CD14-positive monocyte (primary cell): ENCODE measurements at regions of chr9 and their contacts with region 1.

Region 1: DNA sequence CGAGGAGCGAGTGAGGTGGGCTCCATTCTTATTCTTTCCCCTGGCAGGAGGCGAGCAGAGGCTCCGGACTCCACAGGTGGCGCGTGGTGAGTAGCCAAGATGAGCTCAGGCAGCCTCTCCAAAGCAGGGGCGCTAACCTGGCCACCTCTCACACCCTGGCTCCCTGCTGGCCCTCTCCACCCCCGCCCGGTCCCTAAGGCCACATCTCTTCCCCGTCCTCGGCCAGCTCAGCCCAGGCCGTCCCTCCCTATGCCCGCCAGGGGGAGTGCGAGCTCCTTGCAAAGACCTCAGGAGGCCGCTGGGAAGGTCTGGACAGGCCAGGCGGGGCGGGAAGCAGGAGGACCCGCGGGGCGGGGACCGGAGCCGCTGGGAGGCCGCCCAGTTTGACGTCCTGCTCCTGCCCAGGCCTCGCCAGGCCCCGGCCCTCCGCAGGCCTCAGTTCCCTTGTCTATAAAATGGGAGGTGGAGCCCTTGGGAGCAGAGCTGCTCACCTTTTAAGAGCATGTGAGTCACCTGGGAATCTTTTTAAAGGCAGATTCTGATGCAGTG is 46.3 kb upstream of the GGTA1 start:
- DNase-seq: peak; percentile 81 to 89 (median 84)
- H3K4me3 ChIP-seq: no peak overlapping the region
- H3K4me3 Mint-ChIP-seq: no peak overlapping the region
- H3K27ac ChIP-seq: no peak overlapping the region
- H3K27ac Mint-ChIP-seq: no peak overlapping the region
- H3K4me1 ChIP-seq: peaks cover 14 to 15% of the 10 kb centered on the region in 2 donors
- H3K4me1 Mint-ChIP-seq: peaks cover 12% of the 10 kb centered on the region
- H3K27me3 ChIP-seq: peaks cover 0 to 9% of the 10 kb centered on the region in 2 donors
- H3K27me3 Mint-ChIP-seq: peaks cover 6 to 41% (median 31%) of the 10 kb centered on the region in 3 donors
- CTCF ChIP-seq: peak; percentile 95

Region 2: GRCh38 chr9:121566481-121567465 is 20.8 kb after region 1 on chr9:
- intact Hi-C with region 1: no loop called
- DNase-seq: no peak
- H3K4me3 ChIP-seq: no peak overlapping the region
- H3K4me3 Mint-ChIP-seq: no peak overlapping the region
- H3K27ac ChIP-seq: no peak overlapping the region
- H3K27ac Mint-ChIP-seq: peak overlapping the region in 1 of 7 donors; percentile 30
- H3K4me1 ChIP-seq: peaks cover 9 to 23% of the 10 kb centered on the region in 2 donors
- H3K4me1 Mint-ChIP-seq: peaks cover 14% of the 10 kb centered on the region
- H3K27me3 ChIP-seq: no peaks in the 10 kb centered on the region
- H3K27me3 Mint-ChIP-seq: peaks cover 7 to 23% (median 9%) of the 10 kb centered on the region in 3 donors
- CTCF ChIP-seq: no peak

Region 3: DNA sequence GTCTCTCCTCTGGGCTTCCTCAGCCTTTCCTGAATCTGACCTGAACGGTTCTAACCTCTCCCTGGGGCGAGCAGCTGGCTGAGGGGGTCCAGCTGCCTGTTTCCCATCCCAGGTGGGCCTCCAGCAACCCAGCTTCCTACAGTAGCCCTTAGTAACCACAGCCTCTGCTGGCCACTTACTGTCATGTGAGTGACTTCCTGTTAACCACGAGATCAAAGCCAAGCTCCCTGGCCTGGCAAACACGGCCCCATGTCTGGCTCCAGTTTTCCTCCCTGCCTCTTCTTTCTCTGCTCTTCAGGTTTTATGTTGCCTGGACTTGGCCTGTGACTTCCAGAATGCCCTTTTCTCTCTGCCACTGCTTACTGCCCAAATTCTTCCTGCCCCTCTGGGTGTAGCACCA is 58.3 kb after region 1 on chr9:
- intact Hi-C with region 1: loop called (anchors 5 to 10 kb)
- DNase-seq: peak; percentile 64 to 84 (median 78)
- H3K4me3 ChIP-seq: no peak overlapping the region
- H3K4me3 Mint-ChIP-seq: peak overlapping the region in 1 of 2 donors; percentile 66
- H3K27ac ChIP-seq: no peak overlapping the region
- H3K27ac Mint-ChIP-seq: peak overlapping the region in 4 of 7 donors; percentile 48 to 86 (median 76)
- H3K4me1 ChIP-seq: peaks cover 50 to 66% of the 10 kb centered on the region in 2 donors
- H3K4me1 Mint-ChIP-seq: peaks cover 55% of the 10 kb centered on the region
- H3K27me3 ChIP-seq: peaks cover 13 to 18% of the 10 kb centered on the region in 2 donors
- H3K27me3 Mint-ChIP-seq: peaks cover 26 to 43% (median 40%) of the 10 kb centered on the region in 3 donors
- CTCF ChIP-seq: no peak

Region 4: DNA sequence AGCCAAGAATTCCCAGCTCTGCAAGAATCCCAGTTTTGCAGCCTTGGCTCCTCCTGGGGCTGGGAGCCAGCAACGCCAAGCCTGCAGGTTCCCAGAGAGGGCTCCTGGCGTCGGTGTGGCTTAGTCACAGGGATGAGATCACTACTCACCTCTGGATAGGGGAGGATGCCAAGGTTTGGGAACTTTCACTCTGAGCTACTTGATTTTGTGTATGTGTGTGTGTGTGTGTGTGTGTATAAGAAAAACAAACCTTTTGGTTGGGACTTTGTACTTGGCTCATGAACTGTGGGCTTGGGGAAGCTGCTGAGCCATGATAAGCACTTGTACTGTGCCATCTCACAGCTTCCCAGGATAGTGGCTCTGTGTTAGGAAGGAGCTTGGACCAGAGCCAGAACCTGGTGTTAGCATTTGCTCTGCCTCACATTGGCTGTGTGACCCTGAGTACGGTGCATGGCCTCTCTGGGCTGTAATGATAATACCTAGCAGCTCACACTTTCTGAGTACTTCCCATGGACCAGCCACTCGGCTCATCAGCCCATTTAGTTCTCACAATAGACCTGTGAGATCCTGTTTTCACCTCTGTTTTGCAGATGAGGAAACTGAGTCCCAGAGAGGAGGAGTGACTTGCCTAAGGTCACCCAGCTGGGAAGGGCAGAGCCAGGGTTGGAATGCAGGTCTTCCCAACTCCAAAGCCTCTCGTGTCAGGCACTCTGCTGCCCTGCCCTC is 64.1 kb after region 1 on chr9:
- intact Hi-C with region 1: loop called in 1 of 2 experiments (anchors 10 kb)
- DNase-seq: no peak
- H3K4me3 ChIP-seq: no peak overlapping the region
- H3K4me3 Mint-ChIP-seq: no peak overlapping the region
- H3K27ac ChIP-seq: no peak overlapping the region
- H3K27ac Mint-ChIP-seq: peak overlapping the region in 1 of 7 donors; percentile 35
- H3K4me1 ChIP-seq: peaks cover 20 to 29% of the 10 kb centered on the region in 2 donors
- H3K4me1 Mint-ChIP-seq: peaks cover 26% of the 10 kb centered on the region
- H3K27me3 ChIP-seq: peaks cover 0 to 23% of the 10 kb centered on the region in 2 donors
- H3K27me3 Mint-ChIP-seq: peaks cover 40 to 63% (median 46%) of the 10 kb centered on the region in 3 donors
- CTCF ChIP-seq: no peak

Region 5: GRCh38 chr9:121686930-121687541 is 141.1 kb after region 1 on chr9:
- intact Hi-C with region 1: loop called (anchors 5 kb)
- DNase-seq: peak; percentile 18 to 48 (median 33)
- H3K4me3 ChIP-seq: no peak overlapping the region
- H3K4me3 Mint-ChIP-seq: no peak overlapping the region
- H3K27ac ChIP-seq: no peak overlapping the region
- H3K27ac Mint-ChIP-seq: peak overlapping the region in 1 of 7 donors; percentile 6
- H3K4me1 ChIP-seq: no peaks in the 10 kb centered on the region
- H3K4me1 Mint-ChIP-seq: no peaks in the 10 kb centered on the region
- H3K27me3 ChIP-seq: peaks cover 0 to 7% of the 10 kb centered on the region in 2 donors
- H3K27me3 Mint-ChIP-seq: peaks cover 12 to 47% (median 21%) of the 10 kb centered on the region in 3 donors
- CTCF ChIP-seq: peak; percentile 82

Region 6: DNA sequence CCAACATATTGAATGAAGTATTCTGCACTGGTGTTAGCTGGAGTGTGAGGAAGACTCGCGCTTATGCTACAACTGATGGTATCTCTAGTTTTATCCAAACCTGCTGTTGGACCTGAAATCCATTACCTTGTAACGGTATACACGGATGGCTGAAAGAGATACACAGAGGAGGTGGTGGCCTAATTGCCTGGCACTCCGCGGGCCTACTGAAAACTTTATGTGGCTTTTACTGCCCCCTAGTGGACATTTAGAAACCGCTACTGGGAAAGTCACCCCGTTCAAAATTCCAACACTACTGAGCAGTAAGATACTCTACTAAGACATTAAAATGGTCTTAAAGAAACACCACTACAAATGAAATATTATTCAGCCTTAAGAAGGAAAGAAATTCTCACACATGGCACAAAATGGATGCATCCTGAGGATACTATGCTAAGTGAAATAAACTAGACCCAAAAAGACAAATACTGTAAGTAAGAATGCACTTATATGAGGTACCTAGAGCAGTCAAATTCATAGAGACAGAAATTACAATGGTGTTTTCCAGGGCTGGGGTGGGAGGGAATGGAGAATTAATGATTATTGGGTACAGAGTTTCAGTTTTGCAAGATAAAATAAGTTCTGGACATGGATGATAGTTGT is 446.7 kb after region 1 on chr9:
- intact Hi-C with region 1: loop called (anchors 1 to 2 kb)
- DNase-seq: peak; percentile 31 to 61 (median 51)
- H3K4me3 ChIP-seq: no peak overlapping the region
- H3K4me3 Mint-ChIP-seq: no peak overlapping the region
- H3K27ac ChIP-seq: no peak overlapping the region
- H3K27ac Mint-ChIP-seq: no peak overlapping the region
- H3K4me1 ChIP-seq: no peaks in the 10 kb centered on the region
- H3K4me1 Mint-ChIP-seq: no peaks in the 10 kb centered on the region
- H3K27me3 ChIP-seq: no peaks in the 10 kb centered on the region
- H3K27me3 Mint-ChIP-seq: peaks cover 0 to 1% (median 0%) of the 10 kb centered on the region in 3 donors
- CTCF ChIP-seq: peak; percentile 83

Region 7: GRCh38 chr9:122190609-122191381 is 644.8 kb after region 1 on chr9:
- intact Hi-C with region 1: no loop called
- DNase-seq: no peak
- H3K4me3 ChIP-seq: no peak overlapping the region
- H3K4me3 Mint-ChIP-seq: no peak overlapping the region
- H3K27ac ChIP-seq: no peak overlapping the region
- H3K27ac Mint-ChIP-seq: no peak overlapping the region
- H3K4me1 ChIP-seq: no peaks in the 10 kb centered on the region
- H3K4me1 Mint-ChIP-seq: no peaks in the 10 kb centered on the region
- H3K27me3 ChIP-seq: no peaks in the 10 kb centered on the region
- H3K27me3 Mint-ChIP-seq: peaks cover 0 to 3% (median 0%) of the 10 kb centered on the region in 3 donors
- CTCF ChIP-seq: no peak